PC-9 (cell line): ENCODE measurements at regions of chr9 and their contacts with region 1.

Region 1: GRCh38 chr9:124771021-124771866 is at the start of gene NR6A1:
- DNase-seq: peak; percentile 86 to 98
- H3K4me3 ChIP-seq: peak within 1 kb of the TSS; percentile 77
- H3K27ac ChIP-seq: peak within 1 kb of the TSS; percentile 74
- H3K4me1 ChIP-seq: peaks cover 25% of the 10 kb centered on the region
- H3K27me3 ChIP-seq: 0 out of 2 replicates have a peak, but pooled peaks cover under 1% of the 10 kb centered on the region
- CTCF ChIP-seq: no peak
- total RNA-seq, gene NR6A1: 13.0 TPM in 2 replicates

Region 2: GRCh38 chr9:124392871-124393460 is 378.3 kb before region 1 on chr9:
- CTCF ChIA-PET with region 1: no interaction called
- POLR2A ChIA-PET with region 1: no interaction called
- intact Hi-C with region 1: loop called (anchors 10 kb)
- DNase-seq: peak; percentile 87 to 99
- H3K4me3 ChIP-seq: peak overlapping the region; percentile 51; the same call in 1 of the 2 replicates
- H3K27ac ChIP-seq: peak overlapping the region; percentile 97
- H3K4me1 ChIP-seq: peaks cover 82% of the 10 kb centered on the region
- H3K27me3 ChIP-seq: no peaks in the 10 kb centered on the region
- CTCF ChIP-seq: peak; percentile 60; the same call in 1 of the 2 replicates

Region 3: DNA sequence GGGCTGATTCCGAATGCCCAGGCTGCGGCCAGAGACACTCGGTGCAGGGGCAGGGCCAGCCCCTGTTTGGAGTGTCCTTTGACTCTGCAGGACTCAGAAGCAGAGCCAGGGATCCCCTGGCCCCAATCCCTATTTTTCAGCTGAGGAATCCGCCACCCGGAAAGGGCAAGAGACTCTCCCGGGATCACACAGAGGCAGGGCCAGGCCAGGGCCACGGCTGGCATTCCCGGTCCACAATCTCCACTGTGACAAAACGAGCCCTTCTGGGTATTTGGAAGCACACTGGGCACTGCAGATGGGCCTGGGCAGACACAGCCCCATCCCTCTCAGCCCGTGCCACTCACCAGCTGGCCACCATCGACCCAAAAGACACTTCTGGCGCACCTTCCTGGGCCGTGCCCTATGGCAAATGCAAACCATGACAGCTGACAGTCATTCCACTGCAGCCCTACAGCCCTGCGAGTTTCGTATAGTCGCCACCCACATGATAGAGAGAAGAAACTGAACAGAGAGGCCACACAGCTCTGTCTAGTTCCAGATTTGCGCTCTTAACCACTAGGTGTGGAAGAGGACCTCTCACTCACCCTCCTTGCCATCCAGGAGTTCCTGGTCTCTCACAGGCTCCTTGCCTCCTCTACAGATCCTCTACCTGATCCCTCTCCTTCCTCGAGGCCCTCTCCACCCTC is 277.3 kb before region 1 on chr9:
- CTCF ChIA-PET with region 1: no interaction called
- POLR2A ChIA-PET with region 1: no interaction called
- intact Hi-C with region 1: no loop called
- DNase-seq: no peak
- H3K4me3 ChIP-seq: no peak overlapping the region
- H3K27ac ChIP-seq: no peak overlapping the region
- H3K4me1 ChIP-seq: no peaks in the 10 kb centered on the region
- H3K27me3 ChIP-seq: peaks cover 31% of the 10 kb centered on the region
- CTCF ChIP-seq: no peak

Region 4: GRCh38 chr9:124617471-124618141 is 153.6 kb before region 1 on chr9:
- CTCF ChIA-PET with region 1: interaction called, 9 read pairs
- POLR2A ChIA-PET with region 1: no interaction called
- intact Hi-C with region 1: loop called (anchors 2 kb)
- DNase-seq: peak; percentile 60 to 80
- H3K4me3 ChIP-seq: no peak overlapping the region
- H3K27ac ChIP-seq: peak overlapping the region; percentile 38
- H3K4me1 ChIP-seq: peaks cover 19% of the 10 kb centered on the region
- H3K27me3 ChIP-seq: no peaks in the 10 kb centered on the region
- CTCF ChIP-seq: peak; percentile 91

Region 5: DNA sequence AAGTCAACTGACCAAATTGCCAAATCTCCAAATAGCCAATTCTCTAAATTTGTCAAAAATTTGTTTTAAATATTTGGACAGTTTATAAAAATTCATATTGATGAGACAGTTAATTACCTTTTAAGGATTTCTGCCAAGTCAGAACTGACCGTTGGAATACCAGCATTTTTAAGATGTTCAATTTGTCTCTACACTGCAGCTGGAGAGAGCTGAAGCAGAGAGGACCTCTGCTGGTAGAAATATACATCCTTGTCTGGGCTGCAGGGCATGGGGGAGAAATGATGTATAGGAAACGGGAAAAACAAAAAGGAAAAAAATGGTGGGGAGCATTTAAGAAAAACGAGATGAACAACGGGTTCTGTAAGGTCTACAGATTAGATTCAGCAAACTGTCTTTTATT is 17.0 kb before region 1 on chr9:
- CTCF ChIA-PET with region 1: no interaction called
- POLR2A ChIA-PET with region 1: interaction called, 16 read pairs
- intact Hi-C with region 1: no loop called
- DNase-seq: no peak
- H3K4me3 ChIP-seq: no peak overlapping the region
- H3K27ac ChIP-seq: no peak overlapping the region
- H3K4me1 ChIP-seq: peaks cover 27% of the 10 kb centered on the region
- H3K27me3 ChIP-seq: no peaks in the 10 kb centered on the region
- CTCF ChIP-seq: peak; percentile 33; the same call in 1 of the 2 replicates

Region 6: DNA sequence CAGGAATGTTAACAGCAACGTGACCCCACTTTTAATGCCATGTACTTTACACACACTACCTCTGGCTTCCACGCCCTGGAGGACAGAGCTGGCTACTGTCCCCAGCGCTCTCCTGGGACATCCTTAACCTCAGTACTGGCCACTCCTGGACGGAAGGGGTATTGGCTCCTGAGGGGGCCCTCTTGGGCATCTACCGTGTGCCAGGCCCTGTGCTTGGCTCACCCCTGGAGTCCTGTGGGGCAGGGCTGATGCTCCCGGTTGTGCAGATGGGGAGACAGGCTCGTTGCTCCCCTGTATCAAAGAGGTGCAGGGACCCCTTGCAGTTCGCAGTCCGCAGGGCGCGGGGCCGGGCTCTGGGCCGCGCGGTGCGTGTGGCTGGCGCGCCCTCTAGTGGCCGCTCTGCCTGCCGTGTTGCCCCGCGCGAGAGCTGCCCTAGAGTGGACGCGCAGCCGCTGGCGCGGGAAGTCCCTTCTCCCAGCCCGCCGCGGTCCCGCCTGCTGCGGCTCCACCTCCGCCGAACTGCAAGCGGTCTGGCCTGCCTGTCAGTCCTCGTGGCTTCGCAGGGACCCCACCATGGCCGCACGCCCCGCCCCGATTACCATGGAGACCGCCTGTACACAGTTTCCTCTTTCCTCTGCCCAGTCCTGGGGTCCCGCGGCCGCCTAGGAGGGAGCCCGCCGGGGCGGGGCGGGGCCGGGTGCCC is 81.7 kb after region 1 on chr9 and contains the start of gene WDR38:
- CTCF ChIA-PET with region 1: interaction called, 159 read pairs
- POLR2A ChIA-PET with region 1: interaction called, 7 read pairs
- intact Hi-C with region 1: loop called (anchors 1 kb)
- DNase-seq: peak; percentile 66 to 82
- H3K4me3 ChIP-seq: peak within 1 kb of the TSS; percentile 63
- H3K27ac ChIP-seq: no peak within 1 kb of the TSS
- H3K4me1 ChIP-seq: 0 out of 2 replicates have a peak, but pooled peaks cover 7% of the 10 kb centered on the region
- H3K27me3 ChIP-seq: no peaks in the 10 kb centered on the region
- CTCF ChIP-seq: peak; percentile 99
- total RNA-seq, gene WDR38: not detected in 2 replicates

Region 7: DNA sequence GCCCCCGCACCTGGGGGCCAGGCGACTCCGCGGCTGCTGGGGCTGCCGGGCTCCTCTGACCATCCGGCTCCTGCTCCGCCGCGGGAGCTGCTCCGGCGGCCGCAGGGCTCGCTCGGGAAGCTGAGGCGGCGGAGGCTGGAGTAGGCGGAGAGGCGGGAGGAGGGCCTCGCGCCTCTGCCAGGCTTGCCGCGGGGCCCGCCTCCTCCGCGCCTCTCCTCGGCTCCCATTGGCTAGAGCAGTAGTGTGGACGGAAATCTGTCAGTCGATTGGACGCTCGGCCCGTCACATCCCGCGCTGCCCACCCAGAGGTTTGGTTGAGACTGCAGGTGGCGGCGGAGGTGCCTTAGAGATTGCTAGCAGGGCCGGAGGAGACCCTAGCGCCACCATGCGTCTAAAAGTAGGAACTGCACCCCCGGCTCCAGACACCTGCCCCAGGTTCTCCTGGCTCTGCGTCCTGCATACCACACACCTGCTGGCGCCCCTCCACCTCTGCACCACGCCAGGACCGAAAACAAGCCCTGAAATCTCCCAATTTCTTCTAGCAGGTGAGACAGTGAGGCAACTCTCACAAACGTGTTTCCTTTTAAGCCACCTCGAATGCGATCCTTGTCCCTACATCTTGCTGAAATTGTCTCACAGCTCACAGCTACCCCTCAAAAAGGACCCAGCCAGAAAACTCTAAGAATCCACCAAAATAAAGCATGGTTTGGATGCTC is 372.3 kb after region 1 on chr9 and contains the start of gene SCAI:
- CTCF ChIA-PET with region 1: interaction called, 20 read pairs
- POLR2A ChIA-PET with region 1: no interaction called
- intact Hi-C with region 1: no loop called
- DNase-seq: peak; percentile 96 to 100
- H3K4me3 ChIP-seq: peak within 1 kb of the TSS; percentile 57
- H3K27ac ChIP-seq: no peak within 1 kb of the TSS
- H3K4me1 ChIP-seq: peaks cover 5% of the 10 kb centered on the region; the same call in 1 of the 2 replicates
- H3K27me3 ChIP-seq: no peaks in the 10 kb centered on the region
- CTCF ChIP-seq: peak; percentile 98
- total RNA-seq, gene SCAI: 16.0 and 20.2 TPM in 2 replicates